Dorsolateral prefrontal cortex (tissue), 120 donors: ENCODE measurements at regions of chr1 and their contacts with region 1.

Region 1: GRCh38 chr1:209747580-209748262 is 8.1 kb upstream of the TRAF3IP3 start:
- DNase-seq: peak; percentile 56 to 88 (median 80)
- H3K4me3 ChIP-seq: peak overlapping the region in 58 of 59 donors; percentile 4 to 67 (median 48)
- H3K27ac ChIP-seq: peak overlapping the region in 58 of 59 donors; percentile 5 to 95 (median 84)
- H3K27me3 ChIP-seq: no peaks in the 10 kb centered on the region
- CTCF ChIP-seq: peak; percentile 76 to 100 (median 96)

Region 2: GRCh38 chr1:209576798-209577197 is 170.9 kb before region 1 on chr1:
- intact Hi-C with region 1: loop called (anchors 2 kb)
- DNase-seq: peak; percentile 68 to 88 (median 82)
- H3K4me3 ChIP-seq: no peak overlapping the region
- H3K27ac ChIP-seq: peak overlapping the region in 1 of 59 donors; percentile 3
- H3K27me3 ChIP-seq: peaks cover 0 to 21% (median 0%) of the 10 kb centered on the region in 45 donors
- CTCF ChIP-seq: peak; percentile 73 to 99 (median 93)

Region 3: DNA sequence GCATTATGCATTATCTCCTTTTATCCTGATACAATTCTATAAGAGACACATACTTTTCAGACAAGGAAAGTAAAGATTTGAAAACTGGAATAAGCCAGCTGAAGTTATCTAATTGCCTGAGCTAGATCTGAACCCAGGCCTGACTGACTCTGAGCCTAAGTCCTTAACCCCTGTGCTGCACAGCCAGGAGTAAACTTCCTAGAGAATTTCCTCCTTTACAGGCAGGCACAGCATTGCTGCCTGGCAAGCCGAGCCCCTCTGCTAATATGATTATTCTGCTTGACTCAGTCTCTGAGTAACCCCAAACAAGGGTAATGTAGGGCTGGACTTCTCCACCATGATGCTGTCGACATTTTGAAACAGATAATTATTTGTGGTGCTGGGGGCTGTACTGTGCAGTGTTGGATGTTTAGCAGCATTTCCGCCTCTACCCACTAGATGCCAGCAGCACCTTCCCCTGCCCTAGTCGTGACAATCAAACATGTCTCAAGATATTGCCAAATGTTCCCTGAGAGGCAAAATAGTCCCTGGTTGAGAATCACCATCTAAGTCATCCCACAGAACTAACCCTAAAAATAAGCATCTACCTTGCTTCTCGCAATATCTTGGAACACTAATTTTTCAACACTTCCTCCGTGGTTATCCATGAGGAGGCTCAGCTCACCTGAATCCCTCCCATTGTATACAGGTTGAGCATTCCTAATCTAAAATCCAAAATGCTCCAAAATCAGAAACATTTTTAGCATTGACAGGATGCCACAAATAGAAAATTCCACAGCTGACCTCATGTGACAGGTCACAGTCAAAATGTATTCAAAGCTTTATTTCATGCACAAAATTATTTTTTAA is 145.7 kb before region 1 on chr1:
- intact Hi-C with region 1: loop called in 1 of 2 experiments (anchors 1 kb)
- DNase-seq: peak in 6 of 10 donors; percentile 33 to 68 (median 58)
- H3K4me3 ChIP-seq: no peak overlapping the region
- H3K27ac ChIP-seq: peak overlapping the region in 14 of 59 donors; percentile 4 to 67 (median 36)
- H3K27me3 ChIP-seq: peaks cover 0 to 4% (median 0%) of the 10 kb centered on the region in 45 donors
- CTCF ChIP-seq: peak; percentile 45 to 88 (median 74)

Region 4: GRCh38 chr1:209643285-209644020 is 104.3 kb before region 1 on chr1:
- intact Hi-C with region 1: loop called (anchors 2 to 10 kb)
- DNase-seq: peak; percentile 22 to 87 (median 77)
- H3K4me3 ChIP-seq: no peak overlapping the region
- H3K27ac ChIP-seq: peak overlapping the region; percentile 33 to 96 (median 88)
- H3K27me3 ChIP-seq: no peaks in the 10 kb centered on the region
- CTCF ChIP-seq: peak in 39 of 56 donors; percentile 5 to 63 (median 31)

Region 5: DNA sequence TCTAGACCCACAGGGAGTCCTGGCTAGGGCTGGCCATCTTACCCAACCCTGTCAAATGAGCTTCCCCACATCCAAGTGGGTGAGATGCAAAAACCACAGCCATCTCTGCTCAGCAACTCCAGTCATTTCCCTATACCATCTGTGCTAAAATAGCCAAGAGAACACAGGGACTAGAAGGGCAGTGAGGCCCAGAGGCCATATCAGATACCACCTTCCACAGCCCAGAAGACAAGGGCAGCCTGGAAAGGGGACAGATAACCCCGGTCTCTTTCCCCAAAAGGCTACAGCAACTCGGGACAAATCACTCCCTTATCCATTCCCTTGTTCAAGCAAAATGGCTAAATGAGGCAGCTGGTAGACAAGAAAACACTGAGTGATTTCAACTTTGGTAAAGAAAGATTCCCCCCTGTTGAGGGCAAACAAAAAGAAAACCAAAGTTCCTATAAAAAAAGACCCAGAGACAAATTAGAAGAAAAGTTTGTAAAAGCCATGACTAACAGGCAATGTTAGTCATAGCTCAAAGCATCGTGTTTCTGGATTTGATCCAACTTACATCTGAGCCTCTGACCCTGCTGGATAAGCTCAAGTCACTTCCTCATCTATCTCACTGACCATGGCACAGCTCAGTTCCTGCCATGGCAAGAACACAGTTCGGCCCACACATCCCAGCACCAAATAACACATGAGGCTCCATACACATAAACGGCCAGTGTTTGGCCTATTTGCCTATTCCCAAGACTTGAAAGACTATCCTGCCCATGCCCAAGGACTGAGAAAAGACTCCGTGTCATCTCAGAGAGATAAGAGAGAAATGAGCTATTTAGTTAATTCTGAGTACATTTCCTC is 98.6 kb before region 1 on chr1:
- intact Hi-C with region 1: loop called in 1 of 2 experiments (anchors 10 kb)
- DNase-seq: no peak
- H3K4me3 ChIP-seq: no peak overlapping the region
- H3K27ac ChIP-seq: peak overlapping the region in 1 of 59 donors; percentile 32
- H3K27me3 ChIP-seq: no peaks in the 10 kb centered on the region
- CTCF ChIP-seq: no peak

Region 6: GRCh38 chr1:209692745-209693504 is 54.8 kb before region 1 on chr1:
- intact Hi-C with region 1: loop called (anchors 2 kb)
- DNase-seq: peak; percentile 40 to 75 (median 68)
- H3K4me3 ChIP-seq: peak overlapping the region in 5 of 59 donors; percentile 7 to 35 (median 29)
- H3K27ac ChIP-seq: peak overlapping the region in 3 of 59 donors; percentile 4 to 22 (median 9)
- H3K27me3 ChIP-seq: no peaks in the 10 kb centered on the region
- CTCF ChIP-seq: peak; percentile 75 to 98 (median 89)

Region 7: DNA sequence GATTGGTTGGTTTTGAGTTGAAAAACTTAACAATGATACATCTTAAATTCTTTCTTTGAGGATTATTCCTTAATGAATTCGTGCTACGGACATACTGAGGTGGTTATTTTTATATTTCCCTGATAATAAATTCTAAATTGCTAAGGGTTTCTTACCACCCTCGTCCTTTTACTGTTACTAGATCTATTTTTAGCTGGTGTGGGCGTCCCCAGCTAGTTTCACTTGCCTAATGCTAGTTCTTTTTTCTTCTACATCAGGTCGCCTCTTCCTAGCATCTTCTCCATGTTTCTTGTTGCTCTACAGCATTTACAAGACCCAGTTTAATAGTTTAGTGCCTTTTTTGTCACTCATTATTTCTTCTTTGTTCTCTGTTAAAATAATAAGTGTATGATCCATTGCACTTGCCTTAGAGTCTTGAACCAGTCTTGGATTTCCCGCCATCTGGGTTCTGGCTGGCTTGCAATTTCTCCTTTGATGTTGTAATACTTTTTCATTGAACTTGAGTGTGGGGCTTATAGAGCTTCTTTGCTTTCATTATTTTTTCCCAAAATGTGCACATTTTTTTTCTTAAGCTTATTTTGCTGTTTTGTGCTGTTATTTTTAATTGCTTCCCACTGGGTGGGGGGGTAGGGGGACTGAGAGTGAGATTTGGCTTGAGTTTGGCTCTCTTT is 43.8 kb before region 1 on chr1:
- intact Hi-C with region 1: loop called in 1 of 2 experiments (anchors 2 kb)
- DNase-seq: no peak
- H3K4me3 ChIP-seq: peak overlapping the region in 12 of 59 donors; percentile 26 to 60 (median 44)
- H3K27ac ChIP-seq: peak overlapping the region in 49 of 59 donors; percentile 9 to 88 (median 70)
- H3K27me3 ChIP-seq: no peaks in the 10 kb centered on the region
- CTCF ChIP-seq: no peak